H1 (cell line): ENCODE measurements at regions of chr10 and their contacts with region 1.

Region 1: DNA sequence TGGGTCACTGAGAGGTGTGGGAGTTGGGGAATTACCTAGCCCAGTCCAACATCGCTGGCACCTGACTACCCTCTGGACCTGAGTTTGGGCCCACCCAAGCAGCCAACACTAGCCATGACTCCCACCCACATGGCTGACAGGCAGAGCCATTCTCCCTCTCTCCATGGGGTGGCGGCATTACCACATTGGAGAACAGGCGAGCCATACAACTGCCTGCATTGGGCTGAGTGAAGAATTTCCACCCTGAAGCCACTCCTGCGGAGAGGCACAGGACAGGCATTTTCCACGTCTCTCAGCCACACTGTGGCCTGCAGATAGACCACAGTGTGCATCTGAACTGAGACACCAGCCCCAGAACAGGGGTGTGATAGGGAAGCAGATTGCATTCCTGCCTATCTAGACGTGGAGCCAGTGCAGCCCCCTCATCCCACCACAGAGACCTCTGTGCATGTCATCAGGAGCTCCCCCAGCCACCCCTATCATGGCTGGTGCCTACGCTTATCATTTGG is 58.2 kb upstream of the ANTXRL start:
- DNase-seq: peak; percentile 60 to 87
- H3K4me3 ChIP-seq: no peak overlapping the region
- H3K27ac ChIP-seq: no peak overlapping the region
- H3K4me1 ChIP-seq: peaks cover 0 to 9% (median 7%) of the 10 kb centered on the region in 4 experiments; a peak in 5 of 7 replicates
- H3K27me3 ChIP-seq: no peaks in the 10 kb centered on the region
- CTCF ChIP-seq: peak; percentile 92 to 99 (median 92)
- EP300 ChIP-seq: no peak
- POLR2A ChIP-seq: no peak
- RAD21 ChIP-seq: peak; percentile 94 to 96

Region 2: GRCh38 chr10:46033602-46034011 is 195.0 kb before region 1 on chr10:
- CTCF ChIA-PET with region 1: interaction called, 16 read pairs
- POLR2A ChIA-PET with region 1: no interaction called
- DNase-seq: no peak
- H3K4me3 ChIP-seq: no peak overlapping the region
- H3K27ac ChIP-seq: no peak overlapping the region
- H3K4me1 ChIP-seq: peaks cover 0 to 12% (median 3%) of the 10 kb centered on the region in 4 experiments; a peak in 5 of 7 replicates
- H3K27me3 ChIP-seq: no peaks in the 10 kb centered on the region
- CTCF ChIP-seq: no peak
- EP300 ChIP-seq: no peak
- POLR2A ChIP-seq: no peak
- RAD21 ChIP-seq: no peak

Region 3: GRCh38 chr10:46064271-46064957 is 164.2 kb before region 1 on chr10:
- CTCF ChIA-PET with region 1: no interaction called
- POLR2A ChIA-PET with region 1: no interaction called
- DNase-seq: no peak
- H3K4me3 ChIP-seq: no peak overlapping the region
- H3K27ac ChIP-seq: no peak overlapping the region
- H3K4me1 ChIP-seq: peaks cover 0 to 5% (median 2%) of the 10 kb centered on the region in 4 experiments; a peak in 2 of 7 replicates
- H3K27me3 ChIP-seq: no peaks in the 10 kb centered on the region
- CTCF ChIP-seq: no peak
- EP300 ChIP-seq: no peak
- POLR2A ChIP-seq: no peak
- RAD21 ChIP-seq: no peak

Region 4: DNA sequence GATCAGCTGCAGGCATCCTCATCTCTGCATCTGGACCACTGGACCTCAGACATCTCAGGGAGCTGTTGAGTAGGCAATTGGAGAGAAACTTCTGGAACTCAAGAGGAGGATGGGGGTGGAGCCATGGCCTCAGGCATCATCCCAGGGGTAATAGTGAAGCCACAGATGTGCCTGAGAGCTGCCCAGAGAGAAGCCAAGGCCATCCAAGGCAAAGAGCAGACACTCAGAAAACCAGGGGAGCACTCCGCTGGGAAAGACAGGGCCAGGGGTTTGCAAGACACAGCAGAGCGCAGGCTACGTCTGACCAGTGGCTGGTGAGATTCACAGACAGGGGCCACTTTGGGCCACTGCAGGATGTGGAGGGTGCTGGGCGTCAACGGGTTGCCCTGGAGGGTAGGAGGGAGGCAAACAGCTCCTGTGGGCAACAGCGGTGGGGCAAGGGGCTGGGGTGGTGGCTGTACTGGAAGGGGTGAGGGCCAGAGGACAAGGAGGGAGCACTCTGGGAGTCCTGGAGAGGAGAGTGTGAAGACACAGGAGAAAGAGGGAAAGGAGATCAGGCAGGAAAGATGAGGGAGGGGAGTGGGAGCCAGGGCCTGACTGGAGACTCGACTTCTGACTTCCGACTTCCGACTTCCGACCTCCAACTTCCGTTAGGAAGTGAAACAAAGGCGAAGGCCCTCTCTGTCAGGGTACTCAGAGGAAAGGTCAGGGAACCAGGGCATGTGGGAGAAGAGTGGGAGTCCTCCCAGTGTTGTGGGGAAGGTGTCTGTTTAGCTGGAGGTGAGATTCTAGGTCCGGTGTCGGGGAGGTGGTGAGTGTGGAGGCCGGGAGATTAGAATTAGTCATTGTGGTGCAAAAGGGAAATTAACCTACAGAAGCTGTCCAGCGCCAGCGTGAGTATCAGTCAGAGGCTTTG is 11.5 kb before region 1 on chr10:
- CTCF ChIA-PET with region 1: interaction called, 73 read pairs
- POLR2A ChIA-PET with region 1: no interaction called
- DNase-seq: peak in 1 of 2 experiments; percentile 44
- H3K4me3 ChIP-seq: no peak overlapping the region
- H3K27ac ChIP-seq: no peak overlapping the region
- H3K4me1 ChIP-seq: no peaks in the 10 kb centered on the region; a peak in 1 of 7 replicates
- H3K27me3 ChIP-seq: no peaks in the 10 kb centered on the region
- CTCF ChIP-seq: no peak
- EP300 ChIP-seq: no peak
- POLR2A ChIP-seq: no peak
- RAD21 ChIP-seq: no peak

Region 5: DNA sequence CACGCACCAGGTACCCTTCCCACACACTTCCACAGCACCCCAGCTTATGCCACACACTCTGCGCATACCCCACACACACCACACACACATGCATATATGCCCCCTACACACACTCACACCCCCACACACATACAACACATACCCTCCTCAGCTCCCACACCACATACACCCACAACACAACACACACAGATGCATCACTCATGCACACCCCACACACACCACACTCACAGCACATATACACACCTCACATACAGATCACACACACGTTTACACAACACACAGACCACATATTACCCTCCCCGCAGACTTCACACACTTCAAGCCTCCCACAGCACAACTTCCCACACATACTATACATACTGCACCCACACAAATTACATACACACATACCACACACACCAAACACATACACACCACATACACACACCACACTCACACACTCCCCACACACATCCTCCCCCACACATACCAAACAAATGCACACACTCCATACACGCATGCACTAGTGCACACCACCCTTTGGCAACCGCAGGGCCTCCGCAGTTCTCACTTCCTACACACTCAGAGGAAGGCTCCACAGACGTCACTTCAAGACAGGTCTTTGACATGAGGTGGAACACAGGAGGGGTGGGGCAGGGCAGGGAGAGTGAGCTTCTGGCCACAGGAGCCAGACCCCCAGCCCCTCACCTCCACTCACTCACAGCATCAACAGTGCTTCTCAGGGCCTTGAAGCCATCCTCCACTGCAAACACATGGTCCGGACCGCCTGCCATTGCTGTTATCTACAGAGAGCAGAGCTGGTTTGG is 39.7 kb after region 1 on chr10:
- CTCF ChIA-PET with region 1: interaction called, 32 read pairs
- POLR2A ChIA-PET with region 1: no interaction called
- DNase-seq: no peak
- H3K4me3 ChIP-seq: no peak overlapping the region
- H3K27ac ChIP-seq: no peak overlapping the region
- H3K4me1 ChIP-seq: no peaks in the 10 kb centered on the region
- H3K27me3 ChIP-seq: no peaks in the 10 kb centered on the region
- CTCF ChIP-seq: no peak
- EP300 ChIP-seq: no peak
- POLR2A ChIP-seq: no peak
- RAD21 ChIP-seq: no peak

Region 6: DNA sequence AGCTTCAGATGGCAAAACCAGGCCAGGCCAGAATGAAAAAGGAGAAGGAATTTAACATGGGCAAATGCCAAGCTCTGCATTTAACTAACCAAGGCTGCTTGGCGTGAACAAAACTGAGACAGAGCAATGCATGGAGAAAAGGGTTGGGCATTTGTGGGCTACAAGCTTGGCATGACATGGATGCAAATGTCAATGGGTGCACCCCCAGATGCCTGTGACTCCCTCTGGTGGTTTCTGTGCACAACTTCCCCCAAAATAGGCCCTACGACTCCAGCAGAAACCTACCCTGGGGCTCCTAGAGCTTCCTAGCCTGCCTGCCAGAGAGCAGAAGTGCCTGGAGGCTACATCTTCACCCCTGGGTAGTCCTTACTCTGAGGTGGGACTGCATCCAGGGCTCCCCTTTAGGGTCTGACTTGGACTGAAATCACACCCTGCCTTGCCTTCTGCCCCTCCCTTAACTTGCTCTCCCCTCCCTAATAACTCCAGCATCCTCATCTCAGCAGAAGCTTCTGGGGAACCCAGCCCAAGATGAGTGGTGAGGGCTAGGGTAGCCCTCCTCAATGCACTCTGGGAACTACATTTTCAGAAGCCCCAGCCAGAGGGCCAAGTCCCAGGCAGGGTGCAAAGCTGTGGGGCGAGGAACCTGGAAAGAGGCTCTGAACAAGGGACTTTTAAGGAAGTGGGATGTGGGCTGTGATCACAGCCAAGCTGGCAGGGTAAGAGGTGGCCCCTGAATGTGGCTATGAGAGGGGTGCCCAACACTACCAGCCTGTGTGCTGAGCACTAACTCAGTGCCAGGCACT is 316.6 kb after region 1 on chr10:
- CTCF ChIA-PET with region 1: interaction called, 23 read pairs
- POLR2A ChIA-PET with region 1: interaction called, 3 read pairs
- DNase-seq: no peak
- H3K4me3 ChIP-seq: no peak overlapping the region
- H3K27ac ChIP-seq: no peak overlapping the region
- H3K4me1 ChIP-seq: peaks cover 5 to 12% (median 10%) of the 10 kb centered on the region in 4 experiments
- H3K27me3 ChIP-seq: peaks cover 0 to 6% (median 2%) of the 10 kb centered on the region in 4 experiments; a peak in 4 of 7 replicates
- CTCF ChIP-seq: peak in 2 of 3 experiments; percentile 86 to 89; a peak in 3 of 4 replicates
- EP300 ChIP-seq: no peak
- POLR2A ChIP-seq: peak in 1 of 2 experiments; percentile 54; a peak in 2 of 3 replicates
- RAD21 ChIP-seq: peak; percentile 72 to 77